CD4-positive, alpha-beta T cell (primary cell): ENCODE measurements at regions of chr7 and their contacts with region 1.

Region 1: DNA sequence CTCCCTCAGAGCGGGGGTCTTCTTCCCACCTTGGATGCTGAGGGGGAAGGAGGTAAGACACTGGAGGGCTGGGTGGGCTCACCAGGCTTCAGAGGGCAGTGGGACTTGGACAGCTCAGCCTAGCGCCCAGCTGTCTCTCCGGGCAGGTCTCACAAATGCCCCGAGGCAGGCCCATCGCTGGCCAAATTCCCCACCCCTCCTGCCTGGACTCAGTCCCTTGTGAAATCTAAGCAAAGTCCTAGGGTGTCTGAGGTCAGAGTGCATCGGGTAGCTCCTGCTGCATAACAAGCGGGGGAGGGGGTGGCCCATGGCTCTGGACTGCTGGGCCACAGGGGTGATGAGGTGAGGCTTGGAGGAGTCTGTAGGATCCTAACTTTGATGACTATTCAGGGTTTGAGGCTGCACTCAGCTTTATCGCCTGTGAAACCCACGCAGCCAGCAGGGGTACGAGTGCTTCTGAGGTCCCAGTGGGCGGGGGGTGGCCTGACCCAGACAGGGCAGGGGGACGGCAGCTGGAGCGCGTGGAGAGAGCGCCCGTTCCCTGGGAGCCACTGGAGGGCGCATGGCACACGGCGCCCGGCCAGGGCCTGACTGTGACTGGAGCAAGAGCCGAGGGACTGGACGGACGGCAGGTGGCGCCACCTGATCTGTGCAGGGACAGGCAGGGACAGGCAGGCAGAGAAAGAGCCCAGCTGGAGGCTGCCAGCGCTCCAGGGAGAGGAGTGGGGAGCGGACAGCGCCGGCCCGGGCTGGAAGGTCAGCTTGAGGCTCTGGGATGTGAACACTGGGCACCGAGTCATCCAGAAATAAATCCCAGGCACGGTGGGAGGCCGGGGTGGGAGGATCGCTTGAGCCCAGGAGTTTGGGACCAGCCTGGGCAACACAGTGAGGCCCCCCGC is 10.0 kb downstream of the CYP2W1 start:
- DNase-seq: peak; percentile 91 to 98 (median 94)
- ATAC-seq: peak; percentile 100
- H3K4me3 ChIP-seq: no peak overlapping the region
- H3K4me3 Mint-ChIP-seq: no peak overlapping the region
- H3K27ac ChIP-seq: no peak overlapping the region
- H3K27ac Mint-ChIP-seq: no peak overlapping the region
- H3K4me1 ChIP-seq: peaks cover 12% of the 10 kb centered on the region
- H3K4me1 Mint-ChIP-seq: peaks cover 6% of the 10 kb centered on the region
- H3K27me3 ChIP-seq: peaks cover 3 to 6% of the 10 kb centered on the region in 2 experiments
- H3K27me3 Mint-ChIP-seq: no peaks in the 10 kb centered on the region
- CTCF ChIP-seq: peak; percentile 100

Region 2: GRCh38 chr7:601595-602340 is 391.2 kb before region 1 on chr7:
- CTCF ChIA-PET with region 1: no interaction called
- POLR2A ChIA-PET with region 1: no interaction called
- intact Hi-C with region 1: no loop called
- DNase-seq: peak; percentile 43 to 94 (median 64)
- ATAC-seq: peak; percentile 40
- H3K4me3 ChIP-seq: peak overlapping the region; percentile 24
- H3K4me3 Mint-ChIP-seq: peak overlapping the region; percentile 70
- H3K27ac ChIP-seq: peak overlapping the region; percentile 96 to 97
- H3K27ac Mint-ChIP-seq: peak overlapping the region; percentile 98
- H3K4me1 ChIP-seq: peaks cover 62% of the 10 kb centered on the region
- H3K4me1 Mint-ChIP-seq: peaks cover 51% of the 10 kb centered on the region
- H3K27me3 ChIP-seq: no peaks in the 10 kb centered on the region
- H3K27me3 Mint-ChIP-seq: no peaks in the 10 kb centered on the region
- CTCF ChIP-seq: no peak

Region 3: DNA sequence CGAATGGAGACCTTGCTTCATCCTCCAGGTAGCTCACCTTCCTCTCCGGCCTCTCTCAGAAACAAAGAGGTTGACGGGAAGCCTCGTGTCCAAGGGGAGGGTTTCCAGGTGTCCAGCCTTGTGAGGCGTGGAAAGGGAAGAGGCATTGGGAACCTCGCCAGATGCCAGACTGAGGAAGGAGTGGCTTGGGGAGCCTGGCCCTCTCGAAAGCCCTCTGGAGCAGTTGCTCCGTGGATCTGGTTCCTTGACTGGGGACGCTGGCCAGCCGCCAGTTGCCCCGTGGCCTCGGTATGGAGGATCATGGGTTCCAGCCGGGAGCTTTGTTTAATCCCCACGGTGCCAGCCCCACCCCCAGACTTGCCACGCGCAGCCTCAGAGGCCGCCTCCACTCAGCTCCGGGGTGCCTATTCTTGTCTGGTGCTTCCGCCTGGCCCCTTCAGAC is 191.0 kb before region 1 on chr7:
- CTCF ChIA-PET with region 1: no interaction called
- POLR2A ChIA-PET with region 1: no interaction called
- intact Hi-C with region 1: no loop called
- DNase-seq: no peak
- ATAC-seq: no peak
- H3K4me3 ChIP-seq: no peak overlapping the region
- H3K4me3 Mint-ChIP-seq: no peak overlapping the region
- H3K27ac ChIP-seq: no peak overlapping the region
- H3K27ac Mint-ChIP-seq: no peak overlapping the region
- H3K4me1 ChIP-seq: no peaks in the 10 kb centered on the region
- H3K4me1 Mint-ChIP-seq: no peaks in the 10 kb centered on the region
- H3K27me3 ChIP-seq: no peaks in the 10 kb centered on the region
- H3K27me3 Mint-ChIP-seq: no peaks in the 10 kb centered on the region
- CTCF ChIP-seq: no peak

Region 4: GRCh38 chr7:981793-982510 is 11.0 kb before region 1 on chr7:
- CTCF ChIA-PET with region 1: interaction called, 12 read pairs
- POLR2A ChIA-PET with region 1: no interaction called
- intact Hi-C with region 1: no loop called
- DNase-seq: no peak
- ATAC-seq: no peak
- H3K4me3 ChIP-seq: no peak overlapping the region
- H3K4me3 Mint-ChIP-seq: no peak overlapping the region
- H3K27ac ChIP-seq: no peak overlapping the region
- H3K27ac Mint-ChIP-seq: no peak overlapping the region
- H3K4me1 ChIP-seq: no peaks in the 10 kb centered on the region
- H3K4me1 Mint-ChIP-seq: no peaks in the 10 kb centered on the region
- H3K27me3 ChIP-seq: peaks cover 0 to 7% of the 10 kb centered on the region in 2 experiments
- H3K27me3 Mint-ChIP-seq: peaks cover 5% of the 10 kb centered on the region
- CTCF ChIP-seq: no peak

Region 5: GRCh38 chr7:1059200-1060091 is 66.5 kb after region 1 on chr7:
- CTCF ChIA-PET with region 1: interaction called, 220 read pairs
- POLR2A ChIA-PET with region 1: interaction called, 3 read pairs
- intact Hi-C with region 1: no loop called
- DNase-seq: peak in 3 of 14 experiments; percentile 15 to 64 (median 37)
- ATAC-seq: peak; percentile 45
- H3K4me3 ChIP-seq: no peak overlapping the region
- H3K4me3 Mint-ChIP-seq: peak overlapping the region; percentile 69
- H3K27ac ChIP-seq: no peak overlapping the region
- H3K27ac Mint-ChIP-seq: peak overlapping the region; percentile 72
- H3K4me1 ChIP-seq: peaks cover 41% of the 10 kb centered on the region
- H3K4me1 Mint-ChIP-seq: peaks cover 36% of the 10 kb centered on the region
- H3K27me3 ChIP-seq: no peaks in the 10 kb centered on the region
- H3K27me3 Mint-ChIP-seq: no peaks in the 10 kb centered on the region
- CTCF ChIP-seq: no peak

Region 6: GRCh38 chr7:1137510-1138167 is 144.7 kb after region 1 on chr7:
- CTCF ChIA-PET with region 1: interaction called, 11 read pairs
- POLR2A ChIA-PET with region 1: no interaction called
- intact Hi-C with region 1: no loop called
- DNase-seq: no peak
- ATAC-seq: peak; percentile 46
- H3K4me3 ChIP-seq: peak overlapping the region; percentile 62
- H3K4me3 Mint-ChIP-seq: peak overlapping the region; percentile 95
- H3K27ac ChIP-seq: peak overlapping the region; percentile 50 to 65
- H3K27ac Mint-ChIP-seq: peak overlapping the region; percentile 71
- H3K4me1 ChIP-seq: peaks cover 20% of the 10 kb centered on the region
- H3K4me1 Mint-ChIP-seq: peaks cover 19% of the 10 kb centered on the region
- H3K27me3 ChIP-seq: no peaks in the 10 kb centered on the region
- H3K27me3 Mint-ChIP-seq: no peaks in the 10 kb centered on the region
- CTCF ChIP-seq: no peak

Region 7: GRCh38 chr7:1175967-1176851 is 183.3 kb after region 1 on chr7:
- CTCF ChIA-PET with region 1: interaction called, 10 read pairs
- POLR2A ChIA-PET with region 1: no interaction called
- intact Hi-C with region 1: loop called in 1 of 2 experiments (anchors 2 kb)
- DNase-seq: peak; percentile 55 to 85 (median 72)
- ATAC-seq: peak; percentile 59
- H3K4me3 ChIP-seq: no peak overlapping the region
- H3K4me3 Mint-ChIP-seq: peak overlapping the region; percentile 4
- H3K27ac ChIP-seq: no peak overlapping the region
- H3K27ac Mint-ChIP-seq: no peak overlapping the region
- H3K4me1 ChIP-seq: peaks cover 17% of the 10 kb centered on the region
- H3K4me1 Mint-ChIP-seq: peaks cover 13% of the 10 kb centered on the region
- H3K27me3 ChIP-seq: peaks cover 0 to 4% of the 10 kb centered on the region in 2 experiments
- H3K27me3 Mint-ChIP-seq: peaks cover 26% of the 10 kb centered on the region
- CTCF ChIP-seq: peak; percentile 94